ENCODE measurements at regions of chr5 and their contacts with region 1.

Region 1: DNA sequence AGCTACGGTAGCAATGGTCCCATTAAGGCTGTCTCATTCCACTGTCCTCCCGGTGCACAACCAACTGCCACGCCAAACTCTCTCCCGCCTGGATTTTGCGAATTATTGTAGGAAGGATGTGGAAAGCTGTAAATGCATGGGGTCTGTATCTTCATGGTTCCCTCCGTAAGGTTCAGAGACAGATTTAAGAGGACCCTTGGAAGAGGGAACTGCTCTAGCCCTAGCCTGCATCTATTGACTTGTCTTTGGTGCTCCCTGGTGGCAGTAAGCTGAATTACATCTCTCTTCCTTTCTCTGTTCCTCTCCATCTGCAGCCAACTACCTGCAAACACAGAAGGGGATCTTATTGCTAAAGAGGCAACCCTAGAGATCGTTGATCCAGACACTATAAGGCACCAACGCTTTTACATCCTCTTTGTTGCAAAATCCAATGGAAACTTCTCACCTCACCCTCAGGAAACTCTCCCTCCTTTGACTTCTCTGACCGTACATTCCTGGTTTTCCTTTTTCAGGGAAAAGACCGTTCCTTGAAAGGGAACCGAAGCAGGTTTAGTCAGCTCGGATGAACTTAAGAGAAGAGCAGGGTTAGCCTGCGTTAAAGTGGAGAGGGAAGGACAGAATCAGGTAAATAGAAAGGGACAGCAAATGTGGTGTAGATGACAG is 11.9 kb downstream of the CAPSL start:
- DNase-seq: peak; percentile 37
- H3K4me3 ChIP-seq: no peak overlapping the region
- H3K27ac ChIP-seq: no peak overlapping the region
- H3K4me1 ChIP-seq: peaks cover 23% of the 10 kb centered on the region
- H3K27me3 ChIP-seq: no peaks in the 10 kb centered on the region
- CTCF ChIP-seq: peak; percentile 80 to 81

Region 2: DNA sequence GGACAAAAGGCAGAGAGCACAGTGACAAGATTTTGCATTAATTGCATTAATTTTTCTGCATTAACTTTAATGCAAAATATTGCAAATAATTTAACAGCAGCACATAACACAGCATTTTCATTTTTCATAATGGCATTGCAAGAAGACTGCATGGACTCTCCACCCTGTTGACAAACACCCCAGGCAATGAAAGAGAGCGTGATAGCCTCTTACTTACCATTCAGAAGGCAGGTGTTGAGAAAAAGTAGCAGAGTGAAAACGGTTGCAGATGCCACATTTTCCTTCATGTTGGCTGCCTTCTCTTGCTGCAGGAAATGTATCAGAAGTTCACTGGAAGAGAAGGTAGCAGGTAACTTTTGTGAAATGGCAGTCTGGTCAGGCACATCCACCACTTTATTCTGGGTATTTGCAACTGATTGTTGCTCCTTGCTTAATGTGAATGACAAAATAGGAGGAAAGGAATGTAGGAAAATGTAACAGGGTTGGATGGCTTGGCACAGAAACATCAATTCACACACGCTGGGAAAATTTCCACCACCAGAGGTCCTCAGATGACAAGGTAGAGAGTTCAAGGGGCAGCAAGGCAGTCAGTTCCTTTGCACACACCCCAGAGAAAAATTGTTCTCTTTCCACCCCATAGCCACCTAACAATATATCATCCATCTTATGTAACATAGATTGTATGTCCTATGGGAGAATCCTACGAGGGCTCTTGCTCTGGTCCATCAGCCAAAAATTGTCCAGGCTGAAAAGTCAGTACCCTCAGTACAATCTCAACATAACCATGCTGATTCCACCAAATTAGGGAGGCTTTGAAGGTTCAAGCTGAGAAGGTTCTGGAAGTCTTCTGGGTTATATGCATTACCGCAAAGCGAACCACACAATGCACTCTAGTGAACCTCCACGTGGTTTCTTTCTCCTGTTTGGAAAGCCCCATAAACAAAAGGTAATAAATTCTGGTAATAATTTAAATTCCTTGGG is 836.9 kb before region 1 on chr5:
- CTCF ChIA-PET with region 1: interaction called, 20 read pairs
- dilution Hi-C with region 1: no loop called
- in situ Hi-C with region 1: loop called (anchors 10 to 25 kb)
- intact Hi-C with region 1: loop called (anchors 1 kb)
- DNase-seq: peak; percentile 32
- H3K4me3 ChIP-seq: no peak overlapping the region
- H3K27ac ChIP-seq: no peak overlapping the region
- H3K4me1 ChIP-seq: no peaks in the 10 kb centered on the region
- H3K27me3 ChIP-seq: no peaks in the 10 kb centered on the region
- CTCF ChIP-seq: peak; percentile 56 to 74

Region 3: GRCh38 chr5:35430376-35431154 is 496.0 kb before region 1 on chr5:
- CTCF ChIA-PET with region 1: interaction called, 10 read pairs
- dilution Hi-C with region 1: no loop called
- in situ Hi-C with region 1: no loop called
- intact Hi-C with region 1: no loop called
- DNase-seq: peak; percentile 4
- H3K4me3 ChIP-seq: no peak overlapping the region
- H3K27ac ChIP-seq: no peak overlapping the region
- H3K4me1 ChIP-seq: no peaks in the 10 kb centered on the region
- H3K27me3 ChIP-seq: no peaks in the 10 kb centered on the region
- CTCF ChIP-seq: no peak

Region 4: DNA sequence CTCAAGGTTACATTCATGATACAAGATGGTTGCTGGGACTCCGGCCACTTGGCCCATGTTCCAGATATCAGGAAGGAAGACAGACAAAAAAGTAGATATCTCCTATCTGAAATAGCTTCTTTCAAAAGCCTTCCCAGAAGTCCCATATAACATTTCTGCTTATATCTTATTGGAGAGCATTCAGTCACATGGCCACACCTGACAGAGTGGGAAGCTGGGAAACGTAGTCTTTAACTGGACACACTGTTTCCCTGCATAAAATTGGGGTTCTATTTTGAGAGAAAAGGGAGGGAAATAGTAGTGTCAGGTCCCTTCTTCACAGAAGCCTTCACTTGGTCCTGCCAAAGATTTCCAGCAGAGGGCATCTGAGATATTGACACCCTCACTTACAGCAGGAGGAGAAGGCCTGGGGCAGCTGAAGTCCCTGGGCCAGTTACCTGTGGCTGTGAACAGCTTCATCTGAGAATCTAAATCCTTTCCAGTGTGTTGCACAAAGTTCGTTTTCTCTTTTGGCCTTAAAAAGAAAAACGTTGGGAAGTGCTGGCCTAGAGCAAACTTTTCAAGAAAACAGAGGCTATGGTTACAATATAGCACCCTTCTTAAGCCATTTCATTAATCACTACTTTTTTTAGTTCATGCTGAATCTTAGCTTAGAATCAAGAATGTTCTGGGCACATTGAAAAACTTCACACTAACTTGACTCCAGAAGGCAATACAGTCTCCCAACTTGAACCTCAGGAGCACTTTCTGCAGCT is 275.3 kb before region 1 on chr5:
- CTCF ChIA-PET with region 1: interaction called, 8 read pairs
- dilution Hi-C with region 1: no loop called
- in situ Hi-C with region 1: loop called (anchors 5 to 10 kb)
- intact Hi-C with region 1: loop called (anchors 1 kb)
- DNase-seq: peak; percentile 33
- H3K4me3 ChIP-seq: no peak overlapping the region
- H3K27ac ChIP-seq: no peak overlapping the region
- H3K4me1 ChIP-seq: no peaks in the 10 kb centered on the region
- H3K27me3 ChIP-seq: no peaks in the 10 kb centered on the region
- CTCF ChIP-seq: peak; percentile 47 to 66

Region 5: GRCh38 chr5:35815089-35815936 is 111.2 kb before region 1 on chr5:
- CTCF ChIA-PET with region 1: no interaction called
- dilution Hi-C with region 1: no loop called
- in situ Hi-C with region 1: no loop called
- intact Hi-C with region 1: no loop called
- DNase-seq: no peak
- H3K4me3 ChIP-seq: no peak overlapping the region
- H3K27ac ChIP-seq: no peak overlapping the region
- H3K4me1 ChIP-seq: no peaks in the 10 kb centered on the region
- H3K27me3 ChIP-seq: no peaks in the 10 kb centered on the region
- CTCF ChIP-seq: peak; percentile 58 to 65

Measured in mammary epithelial cell (primary cell).